Posterior vena cava (tissue), 2 donors: ENCODE measurements at regions of chr1 and their contacts with region 1.

Region 1: DNA sequence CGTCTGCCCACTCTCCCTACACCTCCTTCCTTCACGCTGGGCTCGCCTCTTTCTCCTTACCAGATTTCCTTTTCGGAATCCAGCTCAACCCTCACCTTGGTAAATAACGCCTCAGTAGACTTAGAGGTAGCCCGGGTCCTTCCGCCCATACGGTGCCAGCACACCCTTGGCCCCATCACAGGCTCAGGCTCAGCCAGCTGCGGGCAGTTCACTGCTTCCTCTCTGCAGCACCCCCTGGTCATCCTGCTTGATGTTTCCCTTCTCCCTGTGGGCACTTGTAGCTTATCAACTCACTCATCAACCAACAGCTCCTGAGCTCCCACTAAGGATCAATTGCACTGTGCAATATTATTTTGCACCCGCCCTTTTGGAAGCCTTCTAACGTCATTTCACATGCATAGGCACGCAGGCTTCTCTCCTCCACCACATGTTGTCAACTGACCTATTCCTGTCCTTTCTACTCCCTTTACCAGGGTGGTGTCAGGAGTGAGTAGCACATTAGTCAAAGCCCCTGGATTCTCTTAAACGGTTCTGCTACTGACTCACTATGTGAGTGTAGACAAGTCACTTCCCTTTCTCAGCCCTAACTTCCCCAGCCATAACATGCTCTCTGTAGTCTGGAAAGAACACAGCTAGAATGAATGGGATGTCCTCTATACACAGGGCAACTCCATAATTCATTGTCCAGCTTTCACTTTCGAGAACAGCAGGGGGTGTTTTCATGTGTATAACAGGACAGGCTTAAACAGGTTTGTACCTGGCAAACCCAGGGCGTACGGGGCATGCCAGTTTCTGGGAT is 47.1 kb upstream of the IRF2BP2 start:
- DNase-seq: no peak

Region 2: DNA sequence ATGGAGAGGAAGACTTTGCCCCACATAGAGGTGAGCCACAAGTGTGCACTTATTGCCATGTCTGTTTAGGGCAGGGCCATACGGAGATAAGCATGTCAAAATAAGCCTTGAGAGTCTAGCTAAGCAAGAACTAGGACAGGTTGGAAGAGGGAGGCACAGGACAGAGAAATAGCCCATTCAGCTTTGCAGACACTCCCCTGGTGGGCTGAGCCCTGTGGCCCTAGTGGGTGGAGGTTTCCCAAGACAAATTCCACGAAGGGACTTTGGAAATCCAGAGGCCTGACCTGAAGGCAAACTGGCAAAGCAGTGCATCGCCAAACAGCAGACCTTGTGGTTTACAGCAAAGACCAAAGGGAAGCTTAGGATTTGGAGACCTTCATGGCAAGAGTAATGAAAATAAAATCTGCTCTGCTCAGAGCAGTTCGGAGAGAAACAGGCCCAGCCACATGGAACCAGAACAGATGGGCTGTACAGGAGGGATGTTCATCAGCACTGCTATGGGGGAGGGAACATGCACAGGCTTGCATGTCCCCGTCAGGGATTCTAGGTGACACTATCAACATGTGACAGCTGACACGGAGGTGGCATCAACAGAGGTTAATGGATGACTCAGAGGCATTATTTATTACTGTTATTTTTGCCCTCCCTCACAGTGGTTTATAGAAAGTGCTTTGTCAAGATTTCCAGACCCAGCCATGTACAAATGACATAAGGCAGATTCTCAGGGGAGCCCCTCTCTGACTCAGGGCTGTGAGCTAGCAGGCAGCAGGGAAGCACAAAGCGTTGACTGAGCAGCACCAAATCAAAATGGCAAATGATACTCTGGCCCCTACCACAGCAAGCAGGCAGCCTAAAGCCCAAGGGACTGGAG is 43.0 kb after region 1 on chr1:
- intact Hi-C with region 1: loop called in 1 of 2 experiments (anchors 1 kb)
- DNase-seq: no peak